Sigmoid colon (tissue), 7 donors: ENCODE measurements at regions of chr3 and their contacts with region 1.

Region 1: DNA sequence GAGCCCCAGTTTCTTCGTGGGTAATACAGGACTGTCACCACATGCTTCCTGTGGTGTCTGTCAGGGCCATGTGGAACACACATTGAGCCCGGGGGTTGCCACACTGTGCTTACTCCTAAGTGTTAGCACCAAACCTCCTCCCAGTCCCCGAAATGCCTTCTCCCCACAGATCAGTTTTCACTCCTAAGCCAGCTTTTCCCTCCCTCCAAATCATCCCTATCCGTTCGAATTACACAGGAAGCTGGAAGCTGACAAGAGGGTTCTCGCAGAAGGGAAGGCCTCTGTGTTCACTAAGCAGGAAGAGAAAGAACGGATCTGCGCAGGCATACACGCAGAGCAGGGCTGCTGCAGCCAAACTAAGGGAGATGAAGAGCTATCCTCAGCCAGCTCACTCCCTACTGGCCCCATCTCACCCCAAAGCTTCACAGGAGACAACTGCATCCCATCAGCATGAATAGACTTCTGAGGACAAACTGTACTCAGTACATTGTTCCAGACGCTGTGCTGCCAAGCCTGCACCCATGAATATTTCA is 32.3 kb downstream of the XXYLT1 start:
- DNase-seq: peak; percentile 96
- H3K4me3 ChIP-seq: no peak overlapping the region
- H3K27ac ChIP-seq: peak overlapping the region; percentile 73 to 94 (median 93)
- H3K4me1 ChIP-seq: peaks cover 0 to 52% (median 37%) of the 10 kb centered on the region in 4 donors
- H3K27me3 ChIP-seq: no peaks in the 10 kb centered on the region
- CTCF ChIP-seq: no peak
- EP300 ChIP-seq: peak; percentile 99 to 100 (median 99)
- POLR2A ChIP-seq: peak in 1 of 2 donors; percentile 20

Region 2: GRCh38 chr3:195154793-195155535 is 83.7 kb before region 1 on chr3:
- intact Hi-C with region 1: loop called (anchors 1 kb)
- DNase-seq: peak; percentile 98
- H3K4me3 ChIP-seq: peak overlapping the region in 3 of 4 donors; percentile 22 to 27 (median 27)
- H3K27ac ChIP-seq: peak overlapping the region; percentile 80 to 94 (median 92)
- H3K4me1 ChIP-seq: peaks cover 0 to 90% (median 81%) of the 10 kb centered on the region in 4 donors
- H3K27me3 ChIP-seq: no peaks in the 10 kb centered on the region
- CTCF ChIP-seq: no peak
- EP300 ChIP-seq: peak in 1 of 4 donors; percentile 82
- POLR2A ChIP-seq: no peak

Region 3: DNA sequence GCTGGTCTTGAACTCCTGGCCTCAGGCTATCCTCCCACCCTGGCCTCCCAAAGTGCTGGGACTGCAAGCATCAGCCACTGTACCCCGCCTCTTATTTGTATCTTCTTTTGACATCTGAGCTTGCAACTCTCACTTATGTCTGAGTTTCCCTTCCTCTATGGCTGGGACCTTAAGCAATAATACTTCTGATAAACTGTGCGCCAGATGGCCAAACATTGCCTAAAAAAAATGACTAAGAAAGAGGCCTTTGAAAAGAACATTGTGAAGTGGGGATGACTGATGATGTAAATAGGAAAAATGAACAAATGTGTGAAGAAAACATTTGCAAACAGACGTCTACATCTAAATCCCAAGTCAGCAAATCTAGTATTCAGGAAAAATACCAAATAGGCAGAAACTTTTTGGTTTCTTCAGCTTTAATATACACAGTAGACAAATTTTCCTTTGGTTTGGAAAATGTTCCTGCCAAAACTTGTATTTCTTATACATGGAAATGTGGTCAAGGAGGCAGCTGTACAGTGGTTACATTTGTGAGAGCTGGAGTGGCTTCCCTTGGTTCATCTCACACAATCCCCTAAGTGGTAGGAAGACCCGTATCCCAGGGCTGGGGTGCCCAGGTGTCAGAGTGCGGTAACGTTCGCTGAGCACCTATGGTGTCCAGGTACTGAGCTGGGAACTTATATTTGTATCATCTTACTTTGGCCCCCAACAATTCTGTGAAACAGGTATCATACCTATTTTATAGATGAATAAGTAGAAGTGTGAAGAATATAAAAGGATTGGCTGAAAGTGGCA is 854.9 kb after region 1 on chr3:
- intact Hi-C with region 1: no loop called
- DNase-seq: no peak
- H3K4me3 ChIP-seq: no peak overlapping the region
- H3K27ac ChIP-seq: peak overlapping the region in 1 of 4 donors; percentile 14
- H3K4me1 ChIP-seq: peaks cover 0 to 13% (median 10%) of the 10 kb centered on the region in 4 donors
- H3K27me3 ChIP-seq: no peaks in the 10 kb centered on the region
- CTCF ChIP-seq: no peak
- EP300 ChIP-seq: peak in 1 of 4 donors; percentile 46
- POLR2A ChIP-seq: no peak